Left cardiac atrium (tissue), 4 donors: ENCODE measurements at regions of chr19 and their contacts with region 1.

Region 1: DNA sequence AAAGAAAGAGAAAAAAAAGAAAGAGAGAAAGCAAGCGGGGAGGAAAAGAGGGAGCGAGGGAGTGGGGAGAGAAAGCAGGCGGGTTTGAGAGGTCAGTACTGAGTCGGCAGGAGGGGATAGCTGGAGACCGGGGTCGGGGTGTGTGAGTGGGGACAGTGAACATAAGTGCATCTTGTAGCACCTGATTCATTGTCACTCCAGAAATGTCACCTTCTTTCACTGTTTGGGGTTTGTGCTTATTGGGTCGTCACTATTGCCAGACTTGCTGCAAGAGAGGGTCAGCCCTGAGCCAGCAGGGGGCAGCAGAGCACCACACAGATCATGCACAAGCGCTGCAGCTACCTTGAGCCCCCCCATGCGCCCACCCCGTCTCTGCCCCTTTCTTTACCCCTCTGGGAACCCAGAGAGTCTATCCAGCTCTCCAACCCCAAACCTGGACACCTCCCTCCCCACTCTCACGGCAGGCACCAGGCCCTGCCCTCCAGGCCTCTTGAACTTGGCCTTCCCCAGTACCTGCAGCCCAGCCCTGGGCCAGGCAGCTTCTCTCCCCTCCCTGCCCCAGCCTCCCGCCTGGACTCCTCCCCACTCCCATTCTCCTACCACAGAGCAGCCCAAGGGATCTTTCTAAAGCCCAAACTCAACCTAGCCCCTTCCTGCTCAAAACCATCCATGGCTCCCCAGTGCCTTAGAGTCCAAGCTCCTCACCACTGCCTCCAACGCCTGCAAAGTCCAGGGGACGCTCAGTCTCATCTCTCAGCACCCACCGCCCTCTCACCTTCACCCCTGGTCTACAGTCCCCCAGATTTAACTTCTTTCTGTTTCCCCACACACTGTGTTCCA is 9.7 kb upstream of the CEACAM16 start:
- DNase-seq: peak; percentile 82
- ATAC-seq: peak; percentile 43 to 51

Region 2: GRCh38 chr19:44718441-44719261 is 29.4 kb after region 1 on chr19:
- intact Hi-C with region 1: loop called in 1 of 2 experiments (anchors 2 kb)
- DNase-seq: peak; percentile 89
- ATAC-seq: peak; percentile 78 to 85

Region 3: DNA sequence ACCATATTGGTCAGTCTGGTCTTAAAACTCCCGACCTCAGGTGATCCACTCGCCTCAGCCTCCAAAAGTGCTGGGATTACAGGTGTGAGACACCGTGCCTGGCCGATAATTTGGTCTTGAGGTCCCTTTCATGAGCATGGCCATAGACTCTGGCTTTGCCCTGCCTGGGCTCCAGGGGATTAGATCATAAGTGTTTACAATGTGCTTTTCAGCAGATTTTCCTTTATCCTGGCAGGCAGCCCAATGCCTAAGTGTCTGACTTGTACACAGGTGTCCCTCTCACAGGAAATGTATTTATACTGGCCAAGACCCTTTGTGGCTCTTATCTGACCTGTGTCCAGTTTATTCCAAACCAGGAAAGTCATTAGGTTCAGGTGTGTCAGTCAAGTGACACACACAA is 135.5 kb after region 1 on chr19:
- intact Hi-C with region 1: no loop called
- DNase-seq: no peak
- ATAC-seq: no peak